ENCODE measurements at regions of chr2 and their contacts with region 1.

Region 1: DNA sequence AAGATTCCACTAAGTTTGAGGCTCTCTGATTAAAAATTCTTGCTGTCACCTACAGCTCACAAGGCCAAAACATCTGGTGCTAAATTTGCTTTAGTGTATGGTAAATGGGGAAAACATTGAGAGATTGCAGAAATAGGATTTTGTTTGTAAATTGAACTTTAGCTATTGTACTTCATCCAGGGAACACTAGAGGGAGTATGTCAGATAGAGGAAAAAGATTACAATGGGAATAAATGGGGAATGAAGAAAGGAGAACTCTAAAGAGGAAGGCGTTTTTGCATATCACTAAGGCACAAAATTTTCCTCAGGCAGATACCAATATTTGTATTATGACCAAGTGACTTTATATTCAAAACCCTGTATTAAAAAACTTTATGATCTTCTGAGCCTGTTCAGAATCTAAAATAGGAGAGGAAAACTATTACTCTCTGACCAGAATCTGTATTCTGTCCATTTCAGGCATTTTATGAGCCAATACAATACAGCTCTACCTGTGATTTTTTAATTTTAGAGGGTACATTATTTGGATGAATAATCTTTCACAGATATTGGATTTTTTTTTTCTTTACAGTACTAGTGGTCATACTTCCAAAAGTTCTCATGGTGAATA is 52.3 kb upstream of the ITGB6 start:
- DNase-seq: peak; percentile 38
- ATAC-seq: no peak
- H3K4me3 ChIP-seq: no peak overlapping the region
- H3K4me3 Mint-ChIP-seq: no peak overlapping the region
- H3K27ac ChIP-seq: no peak overlapping the region
- H3K27ac Mint-ChIP-seq: no peak overlapping the region
- H3K4me1 ChIP-seq: no peaks in the 10 kb centered on the region
- H3K4me1 Mint-ChIP-seq: peaks cover 2% of the 10 kb centered on the region
- H3K27me3 ChIP-seq: no peaks in the 10 kb centered on the region
- H3K27me3 Mint-ChIP-seq: peaks cover 5% of the 10 kb centered on the region
- CTCF ChIP-seq: peak; percentile 90

Region 2: GRCh38 chr2:160210599-160211138 is 41.7 kb before region 1 on chr2:
- CTCF ChIA-PET with region 1: no interaction called
- POLR2A ChIA-PET with region 1: no interaction called
- intact Hi-C with region 1: no loop called
- DNase-seq: peak; percentile 81
- ATAC-seq: peak; percentile 98
- H3K4me3 ChIP-seq: no peak overlapping the region
- H3K4me3 Mint-ChIP-seq: no peak overlapping the region
- H3K27ac ChIP-seq: no peak overlapping the region
- H3K27ac Mint-ChIP-seq: no peak overlapping the region
- H3K4me1 ChIP-seq: peaks cover 3 to 8% of the 10 kb centered on the region in 2 donors
- H3K4me1 Mint-ChIP-seq: peaks cover 21% of the 10 kb centered on the region
- H3K27me3 ChIP-seq: no peaks in the 10 kb centered on the region
- H3K27me3 Mint-ChIP-seq: peaks cover 17% of the 10 kb centered on the region
- CTCF ChIP-seq: peak; percentile 96

Region 3: DNA sequence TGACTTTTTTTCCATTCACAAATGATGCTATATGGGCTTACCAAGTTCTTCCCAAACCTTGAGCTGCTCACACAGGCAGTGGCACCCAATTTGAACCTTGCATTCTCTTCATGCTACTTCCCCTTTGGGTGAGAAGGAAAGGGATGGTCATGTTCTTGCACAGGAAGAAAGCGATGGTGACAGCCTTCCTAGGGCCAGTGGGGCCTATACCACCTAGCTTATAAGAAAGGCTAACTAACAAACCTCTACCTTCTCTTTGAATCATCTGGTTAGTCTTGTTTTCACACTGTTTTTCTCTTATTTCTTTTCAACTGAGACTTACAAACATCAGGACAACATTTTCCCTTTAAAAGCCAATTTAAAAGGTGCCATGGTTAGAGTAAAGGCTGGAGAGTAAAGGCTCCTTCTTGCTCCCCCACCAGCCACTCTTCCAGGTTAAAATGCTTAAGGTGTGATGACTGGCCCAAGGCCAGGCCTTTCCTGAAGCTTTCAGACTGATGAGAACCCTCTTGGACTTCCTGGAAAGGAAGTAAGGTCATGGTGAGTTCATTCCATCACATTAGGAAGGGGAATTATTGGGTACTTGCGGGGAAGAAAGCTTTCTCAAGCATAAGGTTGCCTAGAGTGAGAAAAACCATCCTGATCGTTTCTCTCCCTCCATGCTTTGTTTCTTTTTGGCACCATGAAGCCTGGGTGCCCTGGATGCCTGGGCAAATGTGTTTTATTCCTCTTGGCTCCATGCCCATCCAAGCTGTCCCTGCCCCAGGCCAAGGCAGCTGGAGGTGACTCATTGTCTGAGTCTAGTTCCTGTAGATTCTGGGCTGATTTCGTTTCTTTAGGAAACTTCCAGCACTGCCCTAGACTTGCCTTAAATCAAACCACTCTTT is 10.9 kb before region 1 on chr2:
- CTCF ChIA-PET with region 1: interaction called, 12 read pairs
- POLR2A ChIA-PET with region 1: no interaction called
- intact Hi-C with region 1: no loop called
- DNase-seq: no peak
- ATAC-seq: no peak
- H3K4me3 ChIP-seq: no peak overlapping the region
- H3K4me3 Mint-ChIP-seq: no peak overlapping the region
- H3K27ac ChIP-seq: no peak overlapping the region
- H3K27ac Mint-ChIP-seq: no peak overlapping the region
- H3K4me1 ChIP-seq: no peaks in the 10 kb centered on the region
- H3K4me1 Mint-ChIP-seq: no peaks in the 10 kb centered on the region
- H3K27me3 ChIP-seq: peaks cover 0 to 3% (median 0%) of the 10 kb centered on the region in 4 experiments
- H3K27me3 Mint-ChIP-seq: peaks cover 9% of the 10 kb centered on the region
- CTCF ChIP-seq: no peak

Region 4: DNA sequence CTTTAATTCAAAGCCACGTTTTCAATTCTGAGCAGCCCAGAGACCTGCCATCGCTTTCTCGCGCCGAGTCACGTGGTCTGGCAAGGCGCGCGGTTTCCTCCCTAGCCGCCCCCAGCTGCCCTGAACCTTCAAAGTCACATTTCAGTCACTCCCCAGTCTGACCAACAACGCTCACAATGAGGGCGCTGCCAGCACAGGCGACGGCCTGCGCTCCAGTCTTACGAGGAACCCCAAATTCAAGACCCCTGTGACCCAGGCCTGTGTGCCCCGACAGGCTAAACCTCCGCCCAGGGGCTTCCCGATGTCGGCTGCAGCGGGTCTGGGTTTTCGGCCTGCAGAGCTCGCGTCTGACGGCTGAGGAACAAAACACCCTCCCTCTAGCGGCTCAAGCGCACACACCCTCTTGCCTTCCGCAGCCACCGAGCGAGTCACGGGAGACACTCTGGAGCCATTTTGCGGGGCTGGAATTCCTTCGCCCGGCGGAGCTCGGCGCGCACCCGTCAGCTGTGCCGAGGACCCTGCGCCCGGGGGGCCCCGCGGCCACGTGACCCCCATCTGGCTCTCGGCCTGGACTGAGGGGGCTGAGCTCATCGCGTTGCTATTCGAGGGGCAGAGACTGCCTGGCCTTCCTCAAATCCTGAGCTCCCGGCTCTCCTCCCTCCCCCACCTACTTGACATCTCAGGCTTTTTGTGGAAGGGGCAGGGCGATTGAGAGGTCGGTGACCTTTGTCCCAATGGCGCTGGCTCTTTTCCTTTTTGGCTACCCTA is 17.6 kb after region 1 on chr2:
- CTCF ChIA-PET with region 1: interaction called, 26 read pairs
- POLR2A ChIA-PET with region 1: no interaction called
- intact Hi-C with region 1: no loop called
- DNase-seq: peak; percentile 85
- ATAC-seq: peak; percentile 95
- H3K4me3 ChIP-seq: peak overlapping the region in 4 of 5 experiments; percentile 44 to 75 (median 58)
- H3K4me3 Mint-ChIP-seq: peak overlapping the region; percentile 93
- H3K27ac ChIP-seq: peak overlapping the region in 1 of 2 donors; percentile 64
- H3K27ac Mint-ChIP-seq: peak overlapping the region; percentile 78
- H3K4me1 ChIP-seq: peaks cover 6 to 15% of the 10 kb centered on the region in 2 donors
- H3K4me1 Mint-ChIP-seq: peaks cover 13% of the 10 kb centered on the region
- H3K27me3 ChIP-seq: no peaks in the 10 kb centered on the region
- H3K27me3 Mint-ChIP-seq: peaks cover 6% of the 10 kb centered on the region
- CTCF ChIP-seq: peak; percentile 71

Region 5: DNA sequence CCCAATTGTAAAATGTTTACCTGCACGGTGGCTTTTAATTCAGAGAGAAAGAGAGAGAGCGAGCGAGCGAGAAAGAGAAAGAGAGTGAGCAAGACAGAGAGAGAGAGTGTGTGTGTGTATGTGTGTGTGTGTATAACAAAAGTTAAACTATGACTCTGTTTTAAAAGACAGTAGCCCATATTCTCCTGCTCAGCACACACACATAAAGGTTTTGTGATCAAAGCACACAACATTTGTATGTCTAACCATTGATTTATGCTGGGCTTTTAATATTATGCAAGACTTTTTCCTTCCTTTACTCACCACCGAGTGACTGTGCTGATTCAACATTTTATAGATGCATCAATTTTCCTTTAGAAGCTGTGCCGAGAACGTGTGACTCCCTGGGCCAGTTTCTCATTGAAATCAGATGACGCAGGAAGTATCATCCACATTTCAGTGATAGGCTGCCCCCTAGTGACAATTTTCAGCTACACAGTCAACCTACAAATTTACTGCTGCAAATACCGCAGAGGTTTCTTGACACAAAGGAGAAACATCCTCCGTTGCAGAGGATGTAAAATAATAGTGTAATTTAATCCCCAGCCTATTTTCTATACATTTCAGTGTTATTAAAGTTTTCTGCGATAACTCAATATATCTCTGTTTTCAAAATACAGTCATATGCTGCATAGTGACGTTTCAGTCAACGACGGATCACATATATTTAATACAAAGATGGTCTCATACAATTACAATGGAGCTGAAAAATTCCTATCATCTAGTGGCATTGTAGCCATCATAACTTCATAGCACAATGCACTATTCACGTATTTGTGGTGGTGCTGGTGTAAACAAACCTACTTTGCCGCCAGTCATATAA is 742.0 kb after region 1 on chr2:
- CTCF ChIA-PET with region 1: interaction called, 81 read pairs
- POLR2A ChIA-PET with region 1: no interaction called
- intact Hi-C with region 1: no loop called
- DNase-seq: peak; percentile 81
- ATAC-seq: peak; percentile 68
- H3K4me3 ChIP-seq: no peak overlapping the region
- H3K4me3 Mint-ChIP-seq: no peak overlapping the region
- H3K27ac ChIP-seq: no peak overlapping the region
- H3K27ac Mint-ChIP-seq: no peak overlapping the region
- H3K4me1 ChIP-seq: peaks cover 0 to 3% of the 10 kb centered on the region in 2 donors
- H3K4me1 Mint-ChIP-seq: peaks cover 2% of the 10 kb centered on the region
- H3K27me3 ChIP-seq: no peaks in the 10 kb centered on the region
- H3K27me3 Mint-ChIP-seq: no peaks in the 10 kb centered on the region
- CTCF ChIP-seq: peak; percentile 90

Measured in B cell (primary cell).